Activated CD4-positive, alpha-beta memory T cell treated with anti-CD3 and anti-CD28 coated beads, Interleukin-2, amount 10 ng/mL, durations not matched to agents 7 days and 5 days (primary cell): ENCODE measurements at regions of chr12 and their contacts with region 1.

Region 1: DNA sequence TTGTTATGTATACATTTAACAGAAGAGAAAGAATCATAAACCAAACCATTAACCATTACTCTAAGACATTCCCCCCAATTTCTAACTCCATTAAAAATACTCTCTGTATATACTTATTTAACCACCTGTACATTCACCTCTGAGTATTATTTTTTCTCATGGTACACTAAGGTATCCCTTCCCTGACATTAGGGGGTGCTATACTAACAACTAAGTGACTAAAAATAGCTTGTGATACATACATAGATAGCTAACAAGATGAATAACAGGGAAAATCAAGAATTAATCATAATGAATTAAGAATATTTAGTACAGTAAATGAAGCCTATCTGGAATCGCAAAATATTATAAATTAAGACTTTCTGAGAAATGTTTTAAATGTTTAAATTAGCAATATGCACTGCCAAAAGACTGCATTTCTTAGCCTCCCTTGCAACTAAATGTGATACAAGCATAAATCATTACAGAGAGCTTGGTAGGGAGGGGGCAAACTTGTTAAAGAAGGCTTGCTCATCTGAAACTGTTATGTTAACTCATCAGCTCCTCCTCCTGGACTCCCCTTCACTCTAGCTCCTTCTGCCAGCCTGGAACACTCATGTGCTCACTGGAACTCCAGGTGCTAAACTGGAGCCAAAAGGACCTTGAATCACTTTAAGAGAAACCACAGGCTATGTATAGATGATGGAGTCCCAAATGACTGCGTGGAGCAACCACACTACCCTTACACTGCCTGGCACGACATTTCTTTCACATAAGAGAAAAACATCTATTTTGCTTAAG is 14.9 kb downstream of the C2CD5 start:
- DNase-seq: no peak
- H3K4me3 Mint-ChIP-seq: no peak overlapping the region
- H3K27ac Mint-ChIP-seq: no peak overlapping the region
- H3K4me1 Mint-ChIP-seq: peaks cover 3% of the 10 kb centered on the region
- H3K27me3 Mint-ChIP-seq: no peaks in the 10 kb centered on the region

Region 2: DNA sequence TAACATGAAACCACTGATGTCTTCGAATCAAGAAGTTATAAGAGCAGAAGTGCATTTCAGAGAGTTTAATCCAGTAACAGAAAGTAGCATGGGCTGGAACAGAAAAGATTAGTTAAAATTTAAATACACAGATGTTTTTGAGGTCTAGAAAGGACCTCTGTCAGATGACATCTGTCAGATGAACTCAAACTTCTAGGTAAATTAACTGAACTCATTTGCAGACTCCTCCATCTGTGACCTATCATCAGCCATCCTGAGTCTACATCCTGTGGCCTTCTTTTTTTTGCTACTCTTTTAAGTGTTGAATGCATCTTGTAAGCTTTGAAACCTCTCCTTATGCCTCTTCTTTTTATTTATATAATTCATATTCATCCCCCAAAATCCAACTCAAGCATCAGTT is 38.4 kb before region 1 on chr12:
- CTCF ChIA-PET with region 1: no interaction called
- POLR2A ChIA-PET with region 1: no interaction called
- DNase-seq: no peak
- H3K4me3 Mint-ChIP-seq: no peak overlapping the region
- H3K27ac Mint-ChIP-seq: no peak overlapping the region
- H3K4me1 Mint-ChIP-seq: no peaks in the 10 kb centered on the region
- H3K27me3 Mint-ChIP-seq: no peaks in the 10 kb centered on the region

Region 3: DNA sequence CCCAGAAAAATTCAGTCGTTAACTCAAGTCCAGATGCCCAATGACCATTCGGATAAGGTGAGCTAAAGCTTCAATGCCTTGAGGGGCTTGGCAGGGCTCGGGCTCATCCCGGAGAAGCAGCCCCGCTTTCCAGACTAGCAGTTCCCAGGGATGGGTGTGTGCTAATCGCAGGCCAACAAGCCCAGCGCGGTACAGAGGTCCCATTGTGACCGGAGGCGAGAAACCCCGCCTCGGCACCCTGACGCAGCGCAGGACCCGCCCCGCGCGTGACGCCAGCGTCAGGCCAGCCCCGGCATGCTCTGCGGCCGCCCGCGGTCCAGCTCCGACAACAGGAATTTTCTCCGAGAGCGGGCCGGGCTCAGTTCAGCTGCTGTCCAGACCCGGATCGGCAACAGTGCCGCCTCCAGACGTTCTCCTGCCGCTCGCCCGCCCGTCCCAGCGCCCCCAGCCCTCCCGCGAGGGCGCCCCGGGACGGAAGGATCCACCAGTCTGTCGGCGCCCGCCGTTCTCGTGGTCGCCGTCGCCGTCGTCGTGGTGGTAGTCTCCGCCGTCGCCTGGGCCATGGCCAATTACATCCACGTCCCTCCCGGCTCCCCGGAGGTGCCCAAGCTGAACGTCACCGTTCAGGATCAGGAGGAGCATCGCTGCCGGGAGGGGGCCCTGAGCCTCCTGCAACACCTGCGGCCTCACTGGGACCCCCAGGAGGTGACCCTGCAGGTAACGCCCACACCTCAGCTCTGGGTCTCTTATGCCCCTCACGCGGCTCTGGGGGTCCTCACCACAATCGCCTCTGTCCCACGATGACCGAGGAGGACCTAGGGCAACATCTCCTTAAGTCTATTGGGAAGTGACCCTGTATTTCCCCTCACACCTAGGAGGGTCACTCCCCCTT is 95.6 kb after region 1 on chr12 and contains the start of gene ETNK1:
- CTCF ChIA-PET with region 1: interaction called, 9 read pairs
- POLR2A ChIA-PET with region 1: interaction called, 10 read pairs
- DNase-seq: peak; percentile 89
- H3K4me3 Mint-ChIP-seq: peak within 1 kb of the TSS; percentile 100
- H3K27ac Mint-ChIP-seq: peak within 1 kb of the TSS; percentile 92
- H3K4me1 Mint-ChIP-seq: peaks cover 31% of the 10 kb centered on the region
- H3K27me3 Mint-ChIP-seq: peaks cover 9% of the 10 kb centered on the region
- total RNA-seq, gene ETNK1: 72.0 to 84.9 TPM

Region 4: GRCh38 chr12:22670762-22671161 is 141.3 kb after region 1 on chr12:
- CTCF ChIA-PET with region 1: interaction called, 12 read pairs
- POLR2A ChIA-PET with region 1: no interaction called
- DNase-seq: no peak
- H3K4me3 Mint-ChIP-seq: no peak overlapping the region
- H3K27ac Mint-ChIP-seq: no peak overlapping the region
- H3K4me1 Mint-ChIP-seq: peaks cover 3% of the 10 kb centered on the region
- H3K27me3 Mint-ChIP-seq: no peaks in the 10 kb centered on the region